ENCODE measurements at regions of chr2 and their contacts with region 1.

Region 1: GRCh38 chr2:27409321-27410073 is at the start of gene PPM1G:
- DNase-seq: peak; percentile 82
- ATAC-seq: peak; percentile 94
- H3K4me3 ChIP-seq: peak within 1 kb of the TSS; percentile 97 to 98
- H3K27ac ChIP-seq: peak within 1 kb of the TSS; percentile 91
- H3K4me1 ChIP-seq: peaks cover under 1 to 23% of the 10 kb centered on the region in 2 experiments; a peak in 3 of 4 replicates
- H3K27me3 ChIP-seq: no peaks in the 10 kb centered on the region
- CTCF ChIP-seq: no peak
- POLR2A ChIP-seq: peak; percentile 90
- RAD21 ChIP-seq: no peak
- total RNA-seq, gene PPM1G: 140 TPM

Region 2: DNA sequence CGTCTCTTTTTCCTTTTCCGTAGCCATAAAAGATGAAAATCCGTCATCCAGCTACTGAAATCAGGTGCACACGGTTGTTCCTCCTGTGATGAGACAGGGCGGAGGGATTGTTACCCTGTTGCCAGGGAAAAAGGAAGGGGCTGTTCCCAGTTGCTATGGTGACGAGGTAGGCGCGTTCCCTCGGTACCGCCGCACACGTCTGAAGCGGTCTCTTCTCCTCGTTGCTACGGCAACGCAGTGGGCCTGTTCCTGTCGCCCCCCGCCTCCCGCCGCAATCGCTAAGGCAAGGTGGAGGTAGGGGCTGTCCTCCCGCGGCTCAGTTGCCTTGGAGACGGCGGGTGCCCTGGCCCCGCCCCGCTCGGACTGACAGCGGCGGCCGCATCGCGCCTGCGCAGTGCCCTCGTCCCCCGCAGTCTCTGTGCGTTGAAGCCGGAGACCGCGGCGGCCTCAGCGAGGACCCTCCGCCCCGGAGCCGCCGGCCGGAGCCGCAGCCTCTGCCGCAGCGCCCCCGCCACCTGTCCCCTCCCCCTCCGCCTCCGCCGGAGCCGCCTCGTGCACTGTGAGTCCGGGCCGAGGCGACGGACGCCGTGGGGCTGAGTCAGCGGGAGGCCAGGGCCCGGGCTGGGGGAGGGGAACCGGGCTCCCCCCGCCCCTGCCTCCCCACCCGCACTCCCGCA is 439.1 kb before region 1 on chr2 and contains the start of gene MAPRE3:
- CTCF ChIA-PET with region 1: no interaction called
- POLR2A ChIA-PET with region 1: no interaction called
- RAD21 ChIA-PET with region 1: no interaction called
- intact Hi-C with region 1: no loop called
- DNase-seq: peak; percentile 53
- ATAC-seq: peak; percentile 94
- H3K4me3 ChIP-seq: peak within 1 kb of the TSS; percentile 44 to 62
- H3K27ac ChIP-seq: no peak within 1 kb of the TSS
- H3K4me1 ChIP-seq: peaks cover 4 to 23% of the 10 kb centered on the region in 2 experiments; a peak in 3 of 4 replicates
- H3K27me3 ChIP-seq: peaks cover 5% of the 10 kb centered on the region; the same call in 1 of the 2 replicates
- CTCF ChIP-seq: no peak
- POLR2A ChIP-seq: no peak
- RAD21 ChIP-seq: no peak
- total RNA-seq, gene MAPRE3: 12.1 TPM

Region 3: GRCh38 chr2:27428213-27428977 is 18.9 kb after region 1 on chr2 and contains the start of gene NRBP1:
- CTCF ChIA-PET with region 1: interaction called, 6 read pairs
- POLR2A ChIA-PET with region 1: interaction called, 22 read pairs
- RAD21 ChIA-PET with region 1: interaction called in 1 of 2 experiments, 4 read pairs
- intact Hi-C with region 1: loop called (anchors 2 kb)
- DNase-seq: peak; percentile 76
- ATAC-seq: peak; percentile 86
- H3K4me3 ChIP-seq: peak within 1 kb of the TSS; percentile 85 to 92
- H3K27ac ChIP-seq: peak within 1 kb of the TSS; percentile 93
- H3K4me1 ChIP-seq: peaks cover 22 to 36% of the 10 kb centered on the region in 2 experiments
- H3K27me3 ChIP-seq: no peaks in the 10 kb centered on the region
- CTCF ChIP-seq: no peak
- POLR2A ChIP-seq: peak; percentile 62
- RAD21 ChIP-seq: no peak
- total RNA-seq, gene NRBP1: 79.1 TPM

Region 4: GRCh38 chr2:27628767-27629709 is 219.5 kb after region 1 on chr2 and contains the starts of genes CCDC121 and GPN1:
- CTCF ChIA-PET with region 1: no interaction called
- POLR2A ChIA-PET with region 1: no interaction called
- RAD21 ChIA-PET with region 1: no interaction called
- intact Hi-C with region 1: loop called (anchors 2 kb)
- DNase-seq: peak; percentile 59
- ATAC-seq: peak; percentile 93
- H3K4me3 ChIP-seq: peak within 1 kb of the TSS; percentile 91 to 93
- H3K27ac ChIP-seq: peak within 1 kb of the TSS; percentile 46
- H3K4me1 ChIP-seq: peaks cover 9 to 24% of the 10 kb centered on the region in 2 experiments
- H3K27me3 ChIP-seq: no peaks in the 10 kb centered on the region
- CTCF ChIP-seq: no peak
- POLR2A ChIP-seq: peak; percentile 90
- RAD21 ChIP-seq: no peak
- total RNA-seq, gene CCDC121: 2.1 TPM
- total RNA-seq, gene GPN1: 34.3 TPM

Region 5: DNA sequence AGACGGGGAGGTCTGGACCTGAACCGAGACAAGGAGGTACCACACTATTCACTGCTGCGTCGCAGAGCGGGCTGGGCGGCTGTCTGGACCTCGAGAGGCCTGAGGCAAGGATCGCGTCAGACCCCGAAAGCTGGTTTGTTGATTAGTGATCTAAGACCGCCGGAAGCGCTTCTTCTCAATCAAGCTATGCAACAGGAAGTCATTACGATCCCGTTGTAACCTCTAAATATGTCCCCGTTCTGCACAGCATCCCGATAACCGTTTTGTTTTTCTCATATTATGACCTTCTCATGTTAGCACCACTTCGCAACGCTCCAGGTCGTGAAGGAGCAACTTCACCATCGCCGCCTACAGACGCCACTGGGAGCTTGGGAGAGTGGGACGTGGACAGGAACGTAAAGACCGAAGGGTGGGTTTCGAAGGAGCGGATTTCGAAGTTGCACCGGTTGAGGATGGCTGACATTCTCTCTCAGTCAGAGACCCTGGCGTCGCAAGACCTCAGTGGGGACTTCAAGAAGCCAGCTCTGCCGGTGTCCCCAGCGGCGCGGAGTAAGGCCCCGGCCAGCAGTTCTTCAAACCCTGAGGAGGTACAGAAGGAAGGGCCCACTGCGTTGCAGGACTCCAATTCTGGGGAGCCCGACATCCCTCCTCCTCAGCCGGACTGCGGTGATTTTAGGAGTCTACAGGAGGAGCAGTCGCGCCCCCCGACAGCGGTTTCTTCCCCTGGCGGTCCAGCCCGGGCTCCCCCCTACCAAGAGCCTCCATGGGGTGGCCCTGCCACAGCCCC is 254.2 kb after region 1 on chr2 and contains the starts of genes SLC4A1AP and SUPT7L:
- CTCF ChIA-PET with region 1: no interaction called
- POLR2A ChIA-PET with region 1: no interaction called
- RAD21 ChIA-PET with region 1: no interaction called
- intact Hi-C with region 1: loop called (anchors 5 kb)
- DNase-seq: peak; percentile 85
- ATAC-seq: peak; percentile 83
- H3K4me3 ChIP-seq: peak within 1 kb of the TSS; percentile 92 to 99
- H3K27ac ChIP-seq: peak within 1 kb of the TSS; percentile 71
- H3K4me1 ChIP-seq: peaks cover 7 to 17% of the 10 kb centered on the region in 2 experiments
- H3K27me3 ChIP-seq: no peaks in the 10 kb centered on the region
- CTCF ChIP-seq: 0 out of 6 replicates have a peak, but pooled peaks of 1 of the 3 experiments have one; percentile 17
- POLR2A ChIP-seq: peak; percentile 67
- RAD21 ChIP-seq: no peak
- total RNA-seq, gene SLC4A1AP: 19.8 TPM
- total RNA-seq, gene SUPT7L: 25.2 TPM

Measured in HCT116 (cell line).